ENCODE measurements at regions of chr6 and their contacts with region 1.

Region 1: GRCh38 chr6:114304304-114304887 is 38.4 kb downstream of the HS3ST5 start:
- DNase-seq: no peak
- ATAC-seq: no peak
- H3K4me3 ChIP-seq: no peak overlapping the region
- H3K27ac ChIP-seq: no peak overlapping the region
- H3K4me1 ChIP-seq: no peaks in the 10 kb centered on the region
- H3K27me3 ChIP-seq: no peaks in the 10 kb centered on the region
- CTCF ChIP-seq: peak in 8 of 9 donors; percentile 19 to 61 (median 47)

Region 2: DNA sequence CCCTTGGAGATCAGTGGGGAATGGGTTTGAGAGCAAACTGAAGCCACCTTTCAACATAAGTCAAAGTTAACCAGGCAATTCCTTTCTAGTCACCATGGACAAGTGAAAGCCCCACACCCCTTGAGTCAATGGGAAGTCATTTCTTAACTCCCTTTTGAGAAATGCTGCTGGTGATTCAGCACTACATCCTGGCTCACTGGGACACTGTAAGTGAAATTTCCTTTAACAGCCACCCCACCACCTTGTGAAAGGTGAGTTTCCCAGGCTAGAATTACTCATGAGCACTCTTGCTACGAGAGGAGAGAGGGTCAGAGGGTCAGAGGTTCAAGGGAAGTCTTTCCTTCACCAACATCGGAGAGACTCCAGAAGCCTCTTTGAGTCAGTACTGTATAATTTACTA is 540.5 kb before region 1 on chr6:
- intact Hi-C with region 1: no loop called
- DNase-seq: no peak
- ATAC-seq: peak in 5 of 8 donors; percentile 31 to 78 (median 57)
- H3K4me3 ChIP-seq: no peak overlapping the region
- H3K27ac ChIP-seq: peak overlapping the region in 3 of 10 donors; percentile 7 to 88 (median 43)
- H3K4me1 ChIP-seq: peaks cover 0 to 34% (median 0%) of the 10 kb centered on the region in 9 donors
- H3K27me3 ChIP-seq: no peaks in the 10 kb centered on the region
- CTCF ChIP-seq: no peak

Region 3: DNA sequence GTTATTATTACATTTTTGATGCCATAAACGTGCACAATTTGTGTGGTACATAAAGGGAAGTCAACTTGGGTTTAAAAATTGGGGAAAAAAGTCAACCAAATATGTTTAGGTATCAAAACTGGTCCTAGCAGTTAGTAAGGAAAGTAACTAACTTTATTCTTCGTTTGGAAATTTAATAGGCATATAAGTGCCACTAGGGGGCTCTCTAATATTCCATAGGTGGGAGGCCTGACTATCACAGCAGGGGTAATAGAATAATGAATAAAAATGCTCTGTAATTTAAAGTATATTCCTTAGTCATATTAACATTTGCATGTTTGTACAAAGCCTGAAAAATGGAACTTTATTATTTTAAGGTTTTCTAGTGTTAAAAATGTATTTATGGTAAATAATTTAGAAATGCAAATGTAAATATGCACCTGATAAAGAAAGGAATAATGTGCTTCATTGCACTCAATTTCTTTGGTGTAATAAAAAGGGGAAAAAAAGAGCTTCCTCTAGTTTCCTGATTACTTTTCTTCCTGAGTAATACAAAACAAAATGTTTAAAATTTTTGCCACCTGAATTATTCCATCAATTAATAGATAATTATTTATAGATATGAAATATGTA is 207.7 kb before region 1 on chr6:
- intact Hi-C with region 1: loop called in 1 of 10 experiments (anchors 10 kb)
- DNase-seq: no peak
- ATAC-seq: no peak
- H3K4me3 ChIP-seq: no peak overlapping the region
- H3K27ac ChIP-seq: no peak overlapping the region
- H3K4me1 ChIP-seq: no peaks in the 10 kb centered on the region
- H3K27me3 ChIP-seq: no peaks in the 10 kb centered on the region
- CTCF ChIP-seq: peak; percentile 53 to 80 (median 74)

Region 4: DNA sequence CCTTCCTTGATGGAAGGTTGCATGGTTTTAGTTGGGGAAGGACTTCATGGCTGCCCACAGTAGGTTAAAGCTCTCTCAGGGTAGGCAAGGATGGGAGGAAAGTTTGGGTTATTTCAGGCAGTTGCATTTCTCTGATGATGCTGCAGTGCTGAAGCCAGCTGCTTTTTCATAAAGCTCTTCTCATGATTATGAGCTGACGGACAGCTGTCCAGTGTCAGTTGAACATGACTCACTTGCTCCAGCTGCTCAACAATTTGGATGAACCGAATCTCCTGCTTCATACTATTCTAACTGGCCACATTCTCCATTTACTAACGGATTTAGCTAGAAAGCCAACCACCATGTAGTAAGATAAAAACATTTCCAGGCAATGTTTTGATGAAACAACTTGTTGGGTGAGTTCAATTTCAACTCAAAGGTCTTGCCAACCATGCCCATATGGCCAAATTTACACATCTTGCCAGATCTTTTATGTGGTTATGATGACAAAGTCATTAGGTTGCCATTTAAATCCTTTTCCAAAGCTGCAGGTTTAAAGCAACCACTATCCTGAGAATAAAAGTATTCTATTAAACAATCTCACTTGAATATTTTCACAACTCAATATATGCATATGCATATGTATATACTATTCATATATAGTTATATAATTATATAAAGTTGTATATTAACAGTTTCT is 87.5 kb before region 1 on chr6:
- intact Hi-C with region 1: no loop called
- DNase-seq: no peak
- ATAC-seq: no peak
- H3K4me3 ChIP-seq: no peak overlapping the region
- H3K27ac ChIP-seq: no peak overlapping the region
- H3K4me1 ChIP-seq: no peaks in the 10 kb centered on the region
- H3K27me3 ChIP-seq: no peaks in the 10 kb centered on the region
- CTCF ChIP-seq: no peak